Naive thymus-derived CD8-positive, alpha-beta T cell (primary cell): ENCODE measurements at regions of chr1 and their contacts with region 1.

Region 1: DNA sequence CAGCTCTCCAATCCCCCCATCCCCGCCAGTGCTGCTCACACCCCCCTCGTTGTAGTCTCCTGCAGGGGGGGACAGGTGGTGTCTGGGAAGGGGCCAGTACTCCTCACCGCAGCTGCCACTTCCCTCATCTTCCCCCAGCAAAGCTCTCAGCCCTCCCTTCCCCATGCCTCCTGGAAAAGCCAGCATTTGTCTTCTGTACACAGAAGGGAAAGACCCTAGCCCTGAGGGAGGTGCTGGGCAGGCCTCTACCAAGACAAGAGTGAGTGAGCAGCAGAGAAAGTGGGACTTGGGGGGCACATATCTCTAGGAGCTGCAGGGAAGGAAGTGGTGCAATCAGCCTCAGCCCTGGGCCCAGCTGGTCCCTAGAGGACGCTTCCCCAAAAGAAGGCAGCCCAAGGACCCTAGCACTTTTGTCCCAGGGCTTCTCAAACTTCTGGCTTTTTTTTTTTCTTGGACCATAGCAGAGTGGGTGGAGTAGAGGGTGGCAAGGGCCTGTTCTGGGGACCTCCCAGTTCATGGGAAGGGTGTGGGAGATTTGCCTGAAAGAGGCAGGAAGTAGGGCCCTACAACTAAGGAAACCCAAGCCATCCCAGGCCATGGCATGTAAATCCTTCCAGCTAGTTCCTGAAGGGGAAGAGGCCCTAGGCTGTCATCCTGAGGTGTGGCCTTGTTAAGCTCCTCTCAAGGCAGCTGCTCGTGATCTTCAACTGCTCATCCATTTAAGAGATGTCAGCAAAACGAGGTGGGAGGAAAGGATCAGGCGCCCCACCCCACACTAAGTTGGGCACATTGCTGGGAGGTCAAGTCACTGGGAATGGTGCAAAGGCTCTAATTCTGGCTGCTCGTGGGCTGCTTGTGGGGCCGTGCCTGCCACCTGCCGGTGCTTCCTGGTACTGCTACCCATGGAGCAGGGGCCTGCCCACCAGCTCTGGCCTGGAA is 12.6 kb downstream of the ZC3H12A start:
- DNase-seq: peak; percentile 59 to 88 (median 76)
- ATAC-seq: peak; percentile 72
- H3K4me3 Mint-ChIP-seq: peak overlapping the region in 2 of 10 donors; percentile 26 to 45
- H3K27ac Mint-ChIP-seq: peak overlapping the region; percentile 53 to 88 (median 79)
- H3K4me1 Mint-ChIP-seq: peaks cover 14 to 27% (median 18%) of the 10 kb centered on the region in 4 donors
- H3K27me3 Mint-ChIP-seq: no peaks in the 10 kb centered on the region

Region 2: GRCh38 chr1:37423810-37424209 is 63.1 kb before region 1 on chr1:
- POLR2A ChIA-PET with region 1: no interaction called
- DNase-seq: no peak
- ATAC-seq: no peak
- H3K4me3 Mint-ChIP-seq: no peak overlapping the region
- H3K27ac Mint-ChIP-seq: peak overlapping the region in 1 of 10 donors; percentile 49
- H3K4me1 Mint-ChIP-seq: peaks cover 0 to 2% (median 0%) of the 10 kb centered on the region in 4 donors
- H3K27me3 Mint-ChIP-seq: peaks cover 6 to 55% (median 19%) of the 10 kb centered on the region in 5 donors

Region 3: GRCh38 chr1:37449936-37450335 is 37.0 kb before region 1 on chr1:
- POLR2A ChIA-PET with region 1: interaction called, 52 read pairs
- DNase-seq: peak in 6 of 10 donors; percentile 8 to 46 (median 27)
- ATAC-seq: peak; percentile 57 to 88
- H3K4me3 Mint-ChIP-seq: peak overlapping the region; percentile 12 to 66 (median 35)
- H3K27ac Mint-ChIP-seq: peak overlapping the region in 7 of 10 donors; percentile 12 to 75 (median 53)
- H3K4me1 Mint-ChIP-seq: peaks cover 10 to 21% (median 20%) of the 10 kb centered on the region in 4 donors
- H3K27me3 Mint-ChIP-seq: peaks cover 0 to 12% (median 4%) of the 10 kb centered on the region in 5 donors

Region 4: DNA sequence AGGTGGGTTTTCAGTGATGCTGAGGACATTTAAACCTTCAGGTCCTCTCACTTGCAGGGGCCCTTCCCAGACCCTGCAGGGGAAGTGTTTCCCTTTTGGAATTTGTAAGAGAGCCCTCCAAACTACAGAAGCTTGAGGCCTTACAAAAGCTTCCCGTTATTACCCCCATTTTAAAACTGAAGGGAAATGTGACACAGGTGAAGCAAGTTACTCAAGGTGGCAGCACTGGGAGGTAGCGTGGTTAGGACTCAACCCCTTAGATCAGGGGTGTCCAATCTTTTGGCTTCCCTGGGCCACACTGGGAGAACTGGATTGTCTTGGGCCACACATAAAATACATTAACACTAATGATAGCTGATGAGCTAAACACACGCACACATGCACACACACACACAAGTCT is 28.4 kb before region 1 on chr1:
- POLR2A ChIA-PET with region 1: interaction called, 52 read pairs
- DNase-seq: peak in 1 of 10 donors; percentile 18
- ATAC-seq: peak; percentile 52 to 69
- H3K4me3 Mint-ChIP-seq: no peak overlapping the region
- H3K27ac Mint-ChIP-seq: peak overlapping the region in 5 of 10 donors; percentile 61 to 90 (median 83)
- H3K4me1 Mint-ChIP-seq: peaks cover 6 to 17% (median 8%) of the 10 kb centered on the region in 4 donors
- H3K27me3 Mint-ChIP-seq: no peaks in the 10 kb centered on the region

Region 5: GRCh38 chr1:37474046-37474759 is 12.7 kb before region 1 on chr1 and contains the start of gene ZC3H12A:
- POLR2A ChIA-PET with region 1: interaction called, 110 read pairs
- DNase-seq: peak; percentile 88 to 98 (median 92)
- ATAC-seq: peak; percentile 59
- H3K4me3 Mint-ChIP-seq: peak within 1 kb of the TSS; percentile 84 to 99 (median 96)
- H3K27ac Mint-ChIP-seq: peak within 1 kb of the TSS; percentile 91 to 99 (median 98)
- H3K4me1 Mint-ChIP-seq: peaks cover 47 to 69% (median 63%) of the 10 kb centered on the region in 4 donors
- H3K27me3 Mint-ChIP-seq: no peaks in the 10 kb centered on the region
- polyA plus RNA-seq, gene ZC3H12A: 1.5 to 10.0 (median 3.1) TPM

Region 6: DNA sequence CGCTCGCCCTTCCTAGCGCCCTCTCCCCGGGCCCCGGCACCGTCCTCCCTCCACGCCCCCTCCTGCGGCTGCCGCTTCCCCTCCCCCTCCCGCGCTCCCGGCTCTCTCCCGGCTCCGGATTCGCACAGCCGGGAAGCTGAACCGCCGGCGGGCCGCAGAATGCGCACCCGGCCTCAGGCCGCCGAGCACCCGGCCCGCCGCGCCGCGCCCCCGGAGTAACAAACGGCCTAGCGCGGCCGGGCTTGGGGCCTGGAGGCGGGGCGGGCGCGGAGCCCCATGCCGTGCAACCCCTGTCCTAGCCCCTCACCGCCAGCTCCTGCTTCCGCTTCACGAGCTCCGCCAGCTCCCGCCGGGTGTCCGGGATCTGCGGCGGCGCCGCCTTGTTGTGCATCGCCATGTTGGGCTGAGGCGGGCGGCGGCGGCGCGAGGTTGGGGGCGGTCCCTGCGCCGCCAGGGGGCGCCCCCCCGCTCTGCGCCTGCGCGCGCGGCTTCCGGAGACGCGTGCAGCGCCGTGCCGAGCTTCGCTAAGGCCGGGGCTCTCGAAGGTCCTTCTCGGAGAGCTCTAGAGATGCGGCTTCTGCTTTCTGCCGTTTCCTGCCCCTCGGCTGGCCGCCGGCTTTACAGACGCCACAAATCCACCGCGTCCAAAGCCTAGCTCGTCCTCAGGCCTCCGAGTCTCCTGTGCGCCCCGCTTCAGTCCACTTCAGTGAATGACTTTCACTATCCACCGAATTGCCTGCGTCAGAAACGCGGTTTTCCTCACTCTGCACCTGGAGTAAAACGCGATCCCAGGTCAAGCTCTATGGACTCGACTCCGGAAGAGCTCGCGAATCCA is 27.6 kb after region 1 on chr1 and contains the start of gene MEAF6:
- POLR2A ChIA-PET with region 1: interaction called, 13 read pairs
- DNase-seq: peak; percentile 70 to 94 (median 86)
- ATAC-seq: peak; percentile 90 to 91
- H3K4me3 Mint-ChIP-seq: peak within 1 kb of the TSS; percentile 89 to 99 (median 98)
- H3K27ac Mint-ChIP-seq: peak within 1 kb of the TSS; percentile 98 to 100 (median 99)
- H3K4me1 Mint-ChIP-seq: peaks cover 30 to 51% (median 49%) of the 10 kb centered on the region in 4 donors
- H3K27me3 Mint-ChIP-seq: no peaks in the 10 kb centered on the region
- polyA plus RNA-seq, gene MEAF6: 118 to 184 (median 154) TPM

Region 7: GRCh38 chr1:37567023-37567422 is 80.1 kb after region 1 on chr1:
- POLR2A ChIA-PET with region 1: no interaction called
- DNase-seq: no peak
- ATAC-seq: no peak
- H3K4me3 Mint-ChIP-seq: no peak overlapping the region
- H3K27ac Mint-ChIP-seq: peak overlapping the region in 3 of 10 donors; percentile 6 to 57 (median 56)
- H3K4me1 Mint-ChIP-seq: no peaks in the 10 kb centered on the region
- H3K27me3 Mint-ChIP-seq: no peaks in the 10 kb centered on the region

Region 8: GRCh38 chr1:37650173-37650572 is 163.2 kb after region 1 on chr1:
- POLR2A ChIA-PET with region 1: no interaction called
- DNase-seq: no peak
- ATAC-seq: no peak
- H3K4me3 Mint-ChIP-seq: no peak overlapping the region
- H3K27ac Mint-ChIP-seq: no peak overlapping the region
- H3K4me1 Mint-ChIP-seq: peaks cover 0 to 1% (median 0%) of the 10 kb centered on the region in 4 donors
- H3K27me3 Mint-ChIP-seq: peaks cover 4 to 18% (median 10%) of the 10 kb centered on the region in 5 donors